GM10248 (cell line): ENCODE measurements at regions of chr1 and their contacts with region 1.

Region 1: GRCh38 chr1:230978491-230979388 is at the starts of genes ARV1 and TTC13:
- DNase-seq: peak; percentile 98
- CTCF ChIP-seq: peak; percentile 53

Region 2: GRCh38 chr1:230992100-230992774 is 13.5 kb after region 1 on chr1:
- CTCF ChIA-PET with region 1: interaction called, 10 read pairs
- POLR2A ChIA-PET with region 1: no interaction called
- DNase-seq: no peak
- CTCF ChIP-seq: no peak